HCT116 (cell line): ENCODE measurements at regions of chr4 and their contacts with region 1.

Region 1: GRCh38 chr4:87465739-87466366 is 43.5 kb downstream of the NUDT9 start:
- DNase-seq: peak; percentile 38
- ATAC-seq: peak; percentile 63
- H3K4me3 ChIP-seq: no peak overlapping the region
- H3K27ac ChIP-seq: no peak overlapping the region
- H3K4me1 ChIP-seq: no peaks in the 10 kb centered on the region
- H3K27me3 ChIP-seq: no peaks in the 10 kb centered on the region
- CTCF ChIP-seq: peak; percentile 46 to 81 (median 51)
- POLR2A ChIP-seq: no peak
- RAD21 ChIP-seq: peak; percentile 82

Region 2: DNA sequence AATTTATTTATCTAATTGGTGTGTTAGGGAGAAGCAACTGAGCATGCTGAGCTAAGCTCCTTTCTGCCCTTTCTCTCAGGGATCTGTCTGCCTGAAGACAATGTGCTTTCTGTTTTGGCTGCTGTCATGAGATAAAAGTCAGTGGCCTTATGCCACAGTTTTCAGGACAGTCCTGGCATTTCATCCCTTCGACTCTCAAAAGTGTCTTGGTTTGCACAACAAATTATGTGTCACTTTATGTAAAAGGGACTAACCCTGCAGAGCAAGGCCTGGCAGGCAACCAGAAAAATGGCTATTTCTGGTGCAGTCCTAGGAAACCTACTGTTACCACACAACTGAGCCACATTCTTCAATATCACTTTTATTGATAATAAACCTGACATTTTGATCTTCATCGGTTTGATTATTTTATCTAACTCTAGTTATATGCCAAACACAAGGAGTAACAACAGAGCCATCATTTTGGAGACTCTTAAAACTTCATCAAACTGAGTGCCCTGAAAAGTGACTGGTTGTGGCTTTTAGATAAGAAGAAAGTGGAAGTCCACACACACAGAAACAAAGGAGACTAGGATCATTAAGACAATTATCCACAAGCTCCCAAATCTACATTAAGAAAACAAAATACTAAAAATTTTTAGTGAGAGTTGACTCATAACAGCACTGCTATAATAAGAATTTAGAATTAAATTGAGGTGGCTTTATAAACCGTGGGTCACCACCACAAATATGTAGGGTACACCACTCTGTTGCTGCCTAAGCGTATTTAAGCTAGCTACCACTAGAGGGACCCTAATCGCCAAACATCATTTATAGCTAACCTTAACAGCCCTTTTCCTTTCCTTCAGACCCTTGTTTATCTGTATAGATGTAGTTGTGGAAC is 967.6 kb before region 1 on chr4:
- CTCF ChIA-PET with region 1: no interaction called
- POLR2A ChIA-PET with region 1: no interaction called
- RAD21 ChIA-PET with region 1: no interaction called
- intact Hi-C with region 1: loop called (anchors 10 kb)
- DNase-seq: peak; percentile 47
- ATAC-seq: peak; percentile 97
- H3K4me3 ChIP-seq: no peak overlapping the region
- H3K27ac ChIP-seq: no peak overlapping the region
- H3K4me1 ChIP-seq: peaks cover 8% of the 10 kb centered on the region in 2 experiments; a peak in 3 of 4 replicates
- H3K27me3 ChIP-seq: no peaks in the 10 kb centered on the region
- CTCF ChIP-seq: peak; percentile 61 to 84 (median 80); a peak in 5 of 6 replicates
- POLR2A ChIP-seq: no peak
- RAD21 ChIP-seq: peak; percentile 72

Region 3: DNA sequence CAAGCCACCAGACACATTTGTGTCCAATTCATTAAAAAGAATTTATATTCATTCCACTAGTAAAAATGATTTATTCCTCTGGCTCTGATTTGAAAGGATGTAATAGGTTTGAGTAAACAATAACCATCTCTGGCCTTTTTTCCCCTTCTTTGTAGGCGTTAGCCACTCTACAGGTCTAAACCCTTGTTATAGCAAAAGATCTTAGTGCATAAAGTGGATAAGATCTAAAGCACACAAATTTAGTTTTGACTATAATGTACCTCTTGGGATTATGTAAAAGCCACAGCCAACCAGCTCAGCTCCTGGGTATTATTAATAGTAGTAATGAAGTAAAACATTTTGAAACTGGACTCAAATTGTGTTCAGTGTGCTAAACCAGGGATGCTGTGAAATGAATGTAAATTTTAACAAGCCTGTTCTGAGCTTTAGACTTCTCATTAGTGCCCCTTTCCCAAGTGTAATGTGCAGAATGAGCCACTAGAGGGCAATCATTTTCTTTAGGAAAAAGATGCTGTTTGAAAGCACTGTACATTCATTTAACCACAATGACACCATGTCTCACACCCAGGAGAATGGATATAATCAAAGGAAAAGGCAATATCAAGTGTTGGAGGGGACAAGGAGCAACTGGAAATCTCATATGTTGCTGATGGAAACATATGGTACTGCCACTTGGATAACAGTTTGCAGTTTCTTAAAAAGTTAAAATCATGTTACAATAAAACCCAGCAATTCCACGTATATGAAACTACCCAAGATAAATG is 315.2 kb before region 1 on chr4:
- CTCF ChIA-PET with region 1: interaction called, 3 read pairs
- POLR2A ChIA-PET with region 1: no interaction called
- RAD21 ChIA-PET with region 1: no interaction called
- intact Hi-C with region 1: loop called (anchors 5 kb)
- DNase-seq: peak; percentile 55
- ATAC-seq: peak; percentile 85
- H3K4me3 ChIP-seq: no peak overlapping the region
- H3K27ac ChIP-seq: no peak overlapping the region
- H3K4me1 ChIP-seq: no peaks in the 10 kb centered on the region
- H3K27me3 ChIP-seq: no peaks in the 10 kb centered on the region
- CTCF ChIP-seq: peak; percentile 73 to 95 (median 84)
- POLR2A ChIP-seq: no peak
- RAD21 ChIP-seq: peak; percentile 83

Region 4: GRCh38 chr4:87270144-87270543 is 195.7 kb before region 1 on chr4:
- CTCF ChIA-PET with region 1: interaction called, 5 read pairs
- POLR2A ChIA-PET with region 1: no interaction called
- RAD21 ChIA-PET with region 1: no interaction called
- intact Hi-C with region 1: loop called (anchors 1 kb)
- DNase-seq: peak; percentile 39
- ATAC-seq: peak; percentile 88
- H3K4me3 ChIP-seq: no peak overlapping the region
- H3K27ac ChIP-seq: no peak overlapping the region
- H3K4me1 ChIP-seq: no peaks in the 10 kb centered on the region
- H3K27me3 ChIP-seq: no peaks in the 10 kb centered on the region
- CTCF ChIP-seq: peak; percentile 63 to 65 (median 64); a peak in 5 of 6 replicates
- POLR2A ChIP-seq: no peak
- RAD21 ChIP-seq: peak; percentile 76

Region 5: GRCh38 chr4:87353592-87353991 is 112.3 kb before region 1 on chr4:
- CTCF ChIA-PET with region 1: interaction called, 10 read pairs
- POLR2A ChIA-PET with region 1: no interaction called
- RAD21 ChIA-PET with region 1: no interaction called
- intact Hi-C with region 1: loop called (anchors 5 kb)
- DNase-seq: peak; percentile 7
- ATAC-seq: peak; percentile 66
- H3K4me3 ChIP-seq: no peak overlapping the region
- H3K27ac ChIP-seq: no peak overlapping the region
- H3K4me1 ChIP-seq: no peaks in the 10 kb centered on the region
- H3K27me3 ChIP-seq: no peaks in the 10 kb centered on the region
- CTCF ChIP-seq: peak; percentile 50 to 72 (median 56); a peak in 5 of 6 replicates
- POLR2A ChIP-seq: no peak
- RAD21 ChIP-seq: peak; percentile 66

Region 6: GRCh38 chr4:87375719-87376291 is 90.0 kb before region 1 on chr4:
- CTCF ChIA-PET with region 1: interaction called, 15 read pairs
- POLR2A ChIA-PET with region 1: no interaction called
- RAD21 ChIA-PET with region 1: interaction called in 1 of 2 experiments, 3 read pairs
- intact Hi-C with region 1: loop called (anchors 1 kb)
- DNase-seq: peak; percentile 22
- ATAC-seq: peak; percentile 65; the same call in 1 of the 2 replicates
- H3K4me3 ChIP-seq: no peak overlapping the region
- H3K27ac ChIP-seq: no peak overlapping the region
- H3K4me1 ChIP-seq: no peaks in the 10 kb centered on the region
- H3K27me3 ChIP-seq: no peaks in the 10 kb centered on the region
- CTCF ChIP-seq: peak; percentile 61 to 79 (median 66); a peak in 5 of 6 replicates
- POLR2A ChIP-seq: no peak
- RAD21 ChIP-seq: peak; percentile 79